ENCODE measurements at regions of chr15 and their contacts with region 1.

Region 1: GRCh38 chr15:43029476-43029875 is 76.4 kb downstream of the UBR1 start:
- DNase-seq: no peak
- H3K4me3 ChIP-seq: no peak overlapping the region
- CTCF ChIP-seq: no peak
- POLR2A ChIP-seq: no peak

Region 2: GRCh38 chr15:41133454-41133853 is 1896.0 kb before region 1 on chr15:
- intact Hi-C with region 1: loop called (anchors 10 kb)
- DNase-seq: no peak
- H3K4me3 ChIP-seq: no peak overlapping the region
- CTCF ChIP-seq: no peak
- POLR2A ChIP-seq: no peak

Region 3: GRCh38 chr15:42691308-42691707 is 338.2 kb before region 1 on chr15:
- intact Hi-C with region 1: no loop called
- DNase-seq: no peak
- H3K4me3 ChIP-seq: no peak overlapping the region
- CTCF ChIP-seq: no peak
- POLR2A ChIP-seq: no peak